ENCODE measurements at regions of chr19 and their contacts with region 1.

Region 1: GRCh38 chr19:55605637-55606470 is at the start of gene ZNF865:
- DNase-seq: peak in 9 of 10 donors; percentile 55 to 83 (median 70)
- H3K4me3 ChIP-seq: peak within 1 kb of the TSS; percentile 60 to 90 (median 80)
- H3K27ac ChIP-seq: peak within 1 kb of the TSS; percentile 76 to 99 (median 95)
- H3K27me3 ChIP-seq: no peaks in the 10 kb centered on the region
- CTCF ChIP-seq: peak in 55 of 56 donors; percentile 29 to 72 (median 57)
- total RNA-seq, gene ZNF865: 14.1 to 30.5 (median 19.4) TPM

Region 2: GRCh38 chr19:55620410-55621204 is 14.8 kb after region 1 on chr19:
- intact Hi-C with region 1: loop called in 1 of 2 experiments (anchors 2 kb)
- DNase-seq: no peak
- H3K4me3 ChIP-seq: no peak overlapping the region
- H3K27ac ChIP-seq: peak overlapping the region in 2 of 59 donors; percentile 21 to 54
- H3K27me3 ChIP-seq: no peaks in the 10 kb centered on the region
- CTCF ChIP-seq: no peak